CD8-positive, alpha-beta T cell (primary cell): ENCODE measurements at regions of chr12 and their contacts with region 1.

Region 1: DNA sequence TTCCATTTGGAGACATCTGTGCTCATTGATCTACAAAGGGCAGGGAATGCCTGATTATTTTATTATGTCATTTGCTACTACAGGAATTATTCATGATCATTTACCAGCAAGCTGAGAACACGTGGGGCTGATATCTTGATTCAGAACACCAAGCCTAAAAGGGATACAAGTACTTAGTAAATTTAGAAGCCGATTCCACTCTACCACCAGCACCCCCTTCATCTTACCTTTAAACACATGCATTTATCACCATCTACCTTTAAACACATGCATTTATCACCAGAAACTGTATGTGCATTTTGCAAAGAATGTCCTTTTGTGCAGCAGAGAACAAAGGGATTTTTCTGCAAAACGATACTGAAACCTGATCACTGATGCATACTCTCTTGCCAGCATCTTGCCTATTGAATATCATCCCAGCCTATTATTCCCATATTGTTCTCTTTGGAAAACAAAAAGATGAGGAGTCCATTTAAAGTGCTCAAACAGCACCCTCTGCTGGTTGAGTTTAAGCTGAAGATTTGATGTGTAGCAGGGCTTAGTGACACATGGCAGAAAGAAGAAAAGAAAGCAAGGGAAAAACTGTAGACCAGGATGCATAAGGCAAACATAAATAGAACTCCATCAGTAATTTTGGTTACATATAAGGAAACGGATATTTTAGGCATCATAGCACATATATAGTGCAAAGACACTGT is 132.6 kb upstream of the PLEKHG7 start:
- DNase-seq: peak in 7 of 9 experiments; percentile 25 to 83 (median 45)
- ATAC-seq: peak; percentile 93
- H3K4me3 ChIP-seq: peak overlapping the region in 1 of 2 experiments; percentile 30
- H3K4me3 Mint-ChIP-seq: no peak overlapping the region
- H3K27ac ChIP-seq: no peak overlapping the region
- H3K27ac Mint-ChIP-seq: no peak overlapping the region
- H3K4me1 ChIP-seq: peaks cover 22% of the 10 kb centered on the region
- H3K4me1 Mint-ChIP-seq: peaks cover 6% of the 10 kb centered on the region
- H3K27me3 ChIP-seq: no peaks in the 10 kb centered on the region
- H3K27me3 Mint-ChIP-seq: no peaks in the 10 kb centered on the region
- CTCF ChIP-seq: peak; percentile 98

Region 2: DNA sequence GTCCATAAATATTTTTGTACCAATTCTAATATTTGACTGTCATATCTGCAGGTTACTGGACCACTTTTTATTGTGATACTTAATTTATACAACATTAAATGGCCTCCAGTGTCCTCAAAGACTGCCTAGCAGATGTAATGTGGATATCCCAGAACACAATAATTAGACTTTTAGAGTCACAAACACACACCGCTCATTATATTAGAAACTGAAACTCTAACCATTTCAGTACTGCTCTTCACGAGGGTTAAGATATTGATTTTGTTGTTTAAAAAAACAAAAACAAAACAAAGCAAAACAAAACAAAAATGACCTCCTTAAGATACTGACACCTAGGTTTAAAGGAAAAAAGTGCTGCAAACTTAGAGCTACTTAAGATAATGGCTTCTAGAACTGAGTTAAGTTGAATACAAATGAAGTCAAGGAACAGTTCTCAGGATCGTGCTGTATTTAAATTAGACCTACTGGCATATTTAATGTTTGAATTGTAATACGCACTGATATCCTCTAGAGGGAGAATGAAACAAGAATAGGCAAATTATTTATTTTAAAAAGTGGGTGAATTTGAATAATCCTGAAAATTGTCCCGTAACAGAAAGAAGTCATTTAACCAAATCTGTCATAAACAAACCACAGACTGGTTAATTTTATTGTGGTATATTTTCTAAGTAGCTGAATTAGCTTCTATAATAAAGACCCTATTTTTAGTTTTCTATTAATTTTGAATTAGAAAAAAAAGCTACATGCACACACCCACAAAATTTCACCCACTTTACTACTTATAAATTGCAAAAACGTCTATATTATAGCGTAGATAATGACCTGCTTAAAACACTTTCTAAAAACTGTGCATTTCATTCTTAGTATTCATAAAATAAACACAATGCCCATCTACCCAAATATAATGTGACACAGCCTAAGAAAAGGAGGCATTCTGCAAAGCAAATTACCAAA is 992.3 kb before region 1 on chr12:
- CTCF ChIA-PET with region 1: interaction called, 9 read pairs
- POLR2A ChIA-PET with region 1: interaction called, 3 read pairs
- intact Hi-C with region 1: loop called (anchors 1 to 2 kb)
- DNase-seq: peak in 2 of 9 experiments; percentile 37 to 59
- ATAC-seq: peak; percentile 85
- H3K4me3 ChIP-seq: peak overlapping the region; percentile 34 to 39
- H3K4me3 Mint-ChIP-seq: peak overlapping the region; percentile 77
- H3K27ac ChIP-seq: no peak overlapping the region
- H3K27ac Mint-ChIP-seq: peak overlapping the region; percentile 50
- H3K4me1 ChIP-seq: no peaks in the 10 kb centered on the region
- H3K4me1 Mint-ChIP-seq: peaks cover 14% of the 10 kb centered on the region
- H3K27me3 ChIP-seq: no peaks in the 10 kb centered on the region
- H3K27me3 Mint-ChIP-seq: no peaks in the 10 kb centered on the region
- CTCF ChIP-seq: peak; percentile 87

Region 3: DNA sequence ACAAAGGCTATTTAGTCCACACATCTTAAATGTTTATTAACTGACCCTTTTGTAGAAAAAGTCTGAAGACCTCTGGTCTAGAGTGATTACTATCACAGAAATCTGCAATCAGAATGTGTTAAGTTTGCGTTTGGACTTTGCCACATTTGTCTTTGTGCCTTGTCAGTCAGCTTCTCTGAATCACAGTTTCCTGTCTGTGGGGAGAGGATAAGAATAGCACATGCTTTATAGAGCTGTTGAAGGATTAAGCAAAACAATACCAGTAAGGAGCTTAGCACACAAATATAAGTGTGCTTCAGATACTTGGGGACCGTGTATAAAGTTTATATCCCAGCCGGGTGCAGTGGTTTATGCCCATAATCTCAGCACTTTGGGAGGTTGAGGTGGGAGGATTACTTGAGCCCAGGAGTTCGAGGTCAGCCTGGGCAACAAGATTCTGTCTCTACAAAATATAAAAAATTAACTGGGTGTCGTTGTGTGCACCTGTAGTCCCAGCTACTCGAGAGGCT is 361.5 kb before region 1 on chr12:
- CTCF ChIA-PET with region 1: interaction called, 5 read pairs
- POLR2A ChIA-PET with region 1: interaction called, 3 read pairs
- intact Hi-C with region 1: loop called in 1 of 2 experiments (anchors 1 kb)
- DNase-seq: peak in 7 of 9 experiments; percentile 25 to 74 (median 32)
- ATAC-seq: peak; percentile 83
- H3K4me3 ChIP-seq: peak overlapping the region; percentile 28 to 32
- H3K4me3 Mint-ChIP-seq: peak overlapping the region; percentile 67
- H3K27ac ChIP-seq: peak overlapping the region; percentile 26 to 34
- H3K27ac Mint-ChIP-seq: peak overlapping the region; percentile 92
- H3K4me1 ChIP-seq: peaks cover 27% of the 10 kb centered on the region
- H3K4me1 Mint-ChIP-seq: peaks cover 40% of the 10 kb centered on the region
- H3K27me3 ChIP-seq: no peaks in the 10 kb centered on the region
- H3K27me3 Mint-ChIP-seq: no peaks in the 10 kb centered on the region
- CTCF ChIP-seq: no peak

Region 4: GRCh38 chr12:92593734-92594402 is 23.7 kb after region 1 on chr12:
- CTCF ChIA-PET with region 1: interaction called, 3 read pairs
- POLR2A ChIA-PET with region 1: no interaction called
- intact Hi-C with region 1: loop called in 1 of 2 experiments (anchors 2 kb)
- DNase-seq: peak; percentile 66 to 98 (median 77)
- ATAC-seq: peak; percentile 85
- H3K4me3 ChIP-seq: no peak overlapping the region
- H3K4me3 Mint-ChIP-seq: peak overlapping the region; percentile 44
- H3K27ac ChIP-seq: peak overlapping the region; percentile 73 to 99
- H3K27ac Mint-ChIP-seq: peak overlapping the region; percentile 98
- H3K4me1 ChIP-seq: peaks cover 26% of the 10 kb centered on the region
- H3K4me1 Mint-ChIP-seq: peaks cover 39% of the 10 kb centered on the region
- H3K27me3 ChIP-seq: no peaks in the 10 kb centered on the region
- H3K27me3 Mint-ChIP-seq: no peaks in the 10 kb centered on the region
- CTCF ChIP-seq: no peak